Endothelial cell of umbilical vein (primary cell): ENCODE measurements at regions of chr5 and their contacts with region 1.

Region 1: DNA sequence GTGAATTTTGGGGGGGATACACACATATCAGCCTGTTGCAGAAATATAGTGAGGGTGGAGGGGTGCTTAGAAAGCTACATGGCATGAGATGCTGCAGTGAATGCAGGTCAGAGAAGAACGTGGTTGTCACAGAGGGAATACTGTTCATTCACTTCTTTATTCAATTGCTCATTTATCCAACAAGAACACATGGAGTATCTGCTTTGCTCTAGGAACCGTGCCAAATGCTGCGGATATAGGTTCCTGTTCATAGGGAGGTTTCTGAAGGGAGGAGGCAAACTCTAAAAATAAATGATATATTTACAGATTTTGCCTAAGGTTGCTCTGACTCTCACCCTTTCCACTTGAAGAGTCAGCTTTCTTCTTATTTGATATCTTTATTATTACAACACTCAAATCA is 444.3 kb upstream of the CLINT1 start:
- DNase-seq: no peak
- H3K4me3 ChIP-seq: no peak overlapping the region
- H3K27ac ChIP-seq: no peak overlapping the region
- H3K4me1 ChIP-seq: no peaks in the 10 kb centered on the region
- H3K27me3 ChIP-seq: no peaks in the 10 kb centered on the region
- CTCF ChIP-seq: no peak
- POLR2A ChIP-seq: no peak

Region 2: DNA sequence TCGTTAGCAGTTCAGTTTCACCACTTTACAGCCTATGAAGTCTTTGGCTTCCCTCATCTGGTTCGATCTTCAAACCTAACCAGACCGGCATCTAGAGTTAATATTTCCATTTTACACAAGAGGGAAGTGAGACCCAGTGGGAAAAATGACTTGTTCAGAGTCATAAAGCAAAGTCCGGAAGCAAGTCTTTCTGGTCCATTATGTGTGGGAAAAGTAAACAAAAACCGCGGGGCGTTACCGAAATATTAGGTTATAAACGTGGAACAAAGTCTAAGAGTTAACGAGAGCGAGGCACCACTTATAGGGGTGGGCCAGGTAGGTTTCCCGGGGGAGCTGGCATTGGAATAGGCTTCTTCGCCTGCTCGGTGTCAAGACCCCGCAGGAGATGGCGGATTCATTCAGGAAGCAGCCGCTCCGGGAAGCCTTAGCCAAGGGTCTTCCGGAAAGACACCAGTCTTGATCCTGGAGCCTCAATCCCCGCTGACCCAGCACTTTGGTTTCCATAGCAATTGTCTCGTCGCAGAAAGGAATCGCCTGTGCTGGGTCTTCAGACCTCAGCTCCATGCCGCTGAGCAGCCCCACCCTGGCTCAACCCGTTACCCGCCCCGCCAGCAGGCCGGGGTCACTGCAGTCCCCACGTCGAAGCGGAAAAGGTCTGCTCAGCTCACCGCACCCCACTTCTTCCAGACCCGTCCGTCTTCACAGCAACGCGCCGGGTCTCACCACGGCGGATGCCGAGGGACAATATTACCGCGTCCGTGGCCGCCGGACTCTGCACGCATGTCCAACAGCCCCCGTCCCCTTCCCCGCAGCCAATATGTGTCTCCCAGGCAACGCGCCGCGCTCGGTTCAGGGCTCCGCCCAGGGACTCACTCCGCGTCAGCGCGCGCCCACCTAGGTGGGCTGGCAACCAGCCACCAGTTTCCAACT is 632.3 kb before region 1 on chr5 and contains the start of gene C5orf52:
- CTCF ChIA-PET with region 1: no interaction called
- POLR2A ChIA-PET with region 1: no interaction called
- dilution Hi-C with region 1: no loop called
- intact Hi-C with region 1: no loop called
- DNase-seq: peak; percentile 54
- H3K4me3 ChIP-seq: peak within 1 kb of the TSS; percentile 41 to 63 (median 47)
- H3K27ac ChIP-seq: no peak within 1 kb of the TSS
- H3K4me1 ChIP-seq: peaks cover 13% of the 10 kb centered on the region
- H3K27me3 ChIP-seq: peaks cover 7% of the 10 kb centered on the region in 2 experiments
- CTCF ChIP-seq: no peak
- POLR2A ChIP-seq: no peak
- total RNA-seq, gene C5orf52: not detected in 2 replicates

Region 3: DNA sequence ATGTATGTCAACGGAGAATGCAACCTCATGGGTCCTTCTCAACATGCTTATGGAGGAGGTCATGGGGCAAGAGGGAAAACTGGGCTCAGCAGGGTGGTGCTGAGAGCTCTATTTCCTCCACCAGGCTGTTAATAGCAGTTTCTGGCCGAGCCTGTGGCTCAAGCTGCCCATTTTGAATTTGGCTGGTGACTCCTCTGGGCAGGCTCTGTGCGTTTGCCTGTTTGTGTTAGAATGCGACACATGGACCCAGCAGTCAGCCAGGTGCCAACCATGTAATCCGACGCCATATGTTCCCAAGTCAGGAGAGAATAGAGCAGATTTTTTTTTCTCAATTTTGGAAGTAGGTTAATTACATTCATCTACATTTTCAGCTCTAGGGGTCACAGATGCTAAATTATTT is 56.6 kb before region 1 on chr5:
- CTCF ChIA-PET with region 1: no interaction called
- POLR2A ChIA-PET with region 1: no interaction called
- dilution Hi-C with region 1: no loop called
- intact Hi-C with region 1: no loop called
- DNase-seq: no peak
- H3K4me3 ChIP-seq: no peak overlapping the region
- H3K27ac ChIP-seq: no peak overlapping the region
- H3K4me1 ChIP-seq: no peaks in the 10 kb centered on the region
- H3K27me3 ChIP-seq: no peaks in the 10 kb centered on the region
- CTCF ChIP-seq: no peak
- POLR2A ChIP-seq: no peak

Region 4: GRCh38 chr5:158277276-158277675 is 26.0 kb before region 1 on chr5:
- CTCF ChIA-PET with region 1: no interaction called
- POLR2A ChIA-PET with region 1: no interaction called
- dilution Hi-C with region 1: no loop called
- intact Hi-C with region 1: loop called (anchors 1 kb)
- DNase-seq: no peak
- H3K4me3 ChIP-seq: no peak overlapping the region
- H3K27ac ChIP-seq: no peak overlapping the region
- H3K4me1 ChIP-seq: no peaks in the 10 kb centered on the region
- H3K27me3 ChIP-seq: no peaks in the 10 kb centered on the region
- CTCF ChIP-seq: no peak
- POLR2A ChIP-seq: no peak

Region 5: DNA sequence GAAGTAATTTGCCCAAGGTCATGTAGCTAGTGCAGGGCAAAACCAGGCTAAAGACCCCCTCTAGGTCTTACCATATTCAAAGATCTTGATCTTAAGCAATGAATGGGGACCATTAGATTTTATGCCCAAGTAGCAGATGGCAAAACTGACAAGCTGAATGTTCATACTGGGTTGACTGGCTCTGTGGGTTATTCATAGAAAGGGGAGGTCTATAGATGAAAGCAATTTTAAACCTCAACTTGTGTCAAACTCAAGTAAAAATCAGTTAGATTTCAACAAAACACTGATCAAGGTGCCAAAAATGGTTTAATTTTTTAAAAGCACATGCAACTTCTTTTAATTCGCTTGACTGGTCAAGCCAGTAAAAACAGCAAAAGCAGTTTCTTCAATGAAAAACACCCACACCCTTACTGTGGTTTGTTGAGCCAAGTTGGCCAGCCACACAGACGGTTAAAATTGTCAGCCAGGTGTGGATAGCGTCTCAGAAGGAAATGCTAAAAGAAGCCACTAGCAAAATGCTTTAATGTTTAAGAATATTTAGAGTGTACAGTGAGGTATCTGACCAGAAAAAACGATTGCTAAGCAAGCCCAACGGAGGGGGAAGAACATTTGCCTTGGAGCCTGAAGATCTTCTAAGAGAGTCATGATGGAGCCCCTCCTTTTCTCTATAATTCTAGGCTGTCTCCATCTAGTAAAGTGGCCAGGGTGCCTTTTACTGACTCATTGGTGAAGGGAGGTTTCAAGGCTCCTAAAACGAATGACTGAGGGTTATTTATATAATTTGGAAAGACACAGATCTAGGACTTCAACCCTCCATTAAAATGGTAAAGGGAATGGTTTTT is 95.3 kb after region 1 on chr5:
- CTCF ChIA-PET with region 1: no interaction called
- POLR2A ChIA-PET with region 1: no interaction called
- dilution Hi-C with region 1: no loop called
- intact Hi-C with region 1: no loop called
- DNase-seq: no peak
- H3K4me3 ChIP-seq: no peak overlapping the region
- H3K27ac ChIP-seq: no peak overlapping the region
- H3K4me1 ChIP-seq: peaks cover 2% of the 10 kb centered on the region
- H3K27me3 ChIP-seq: no peaks in the 10 kb centered on the region
- CTCF ChIP-seq: no peak
- POLR2A ChIP-seq: no peak